ENCODE measurements at regions of chr4 and their contacts with region 1.

Region 1: GRCh38 chr4:17468371-17469221 is 43.3 kb downstream of the QDPR start:
- DNase-seq: no peak
- H3K4me3 ChIP-seq: no peak overlapping the region
- CTCF ChIP-seq: peak; percentile 51

Region 2: GRCh38 chr4:16450724-16451123 is 1017.9 kb before region 1 on chr4:
- CTCF ChIA-PET with region 1: interaction called, 16 read pairs
- POLR2A ChIA-PET with region 1: no interaction called
- DNase-seq: no peak
- H3K4me3 ChIP-seq: no peak overlapping the region
- CTCF ChIP-seq: peak; percentile 12

Region 3: DNA sequence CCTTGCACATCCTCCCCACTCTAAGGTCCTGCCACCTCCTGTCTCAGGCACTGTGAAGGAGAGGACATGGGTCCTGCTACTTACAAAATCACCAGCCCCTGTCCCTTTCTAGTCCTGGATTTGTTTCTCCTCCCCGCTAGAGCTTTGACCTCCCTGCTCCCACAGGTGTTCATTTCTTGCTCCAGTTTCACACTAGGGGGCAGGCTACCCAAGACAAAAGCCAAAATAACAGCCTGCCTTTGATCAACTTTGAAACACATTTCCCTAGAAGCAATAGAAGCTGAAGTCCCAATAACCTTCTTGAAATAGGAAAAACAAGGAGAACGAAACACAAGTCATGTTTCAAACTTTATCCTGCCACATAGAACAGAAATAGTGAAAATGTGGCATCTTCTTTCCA is 121.2 kb before region 1 on chr4:
- CTCF ChIA-PET with region 1: interaction called, 213 read pairs
- POLR2A ChIA-PET with region 1: no interaction called
- DNase-seq: no peak
- H3K4me3 ChIP-seq: no peak overlapping the region
- CTCF ChIP-seq: peak; percentile 58

Region 4: GRCh38 chr4:17447675-17448298 is 20.8 kb before region 1 on chr4:
- CTCF ChIA-PET with region 1: interaction called, 123 read pairs
- POLR2A ChIA-PET with region 1: no interaction called
- DNase-seq: no peak
- H3K4me3 ChIP-seq: no peak overlapping the region
- CTCF ChIP-seq: peak; percentile 66

Region 5: DNA sequence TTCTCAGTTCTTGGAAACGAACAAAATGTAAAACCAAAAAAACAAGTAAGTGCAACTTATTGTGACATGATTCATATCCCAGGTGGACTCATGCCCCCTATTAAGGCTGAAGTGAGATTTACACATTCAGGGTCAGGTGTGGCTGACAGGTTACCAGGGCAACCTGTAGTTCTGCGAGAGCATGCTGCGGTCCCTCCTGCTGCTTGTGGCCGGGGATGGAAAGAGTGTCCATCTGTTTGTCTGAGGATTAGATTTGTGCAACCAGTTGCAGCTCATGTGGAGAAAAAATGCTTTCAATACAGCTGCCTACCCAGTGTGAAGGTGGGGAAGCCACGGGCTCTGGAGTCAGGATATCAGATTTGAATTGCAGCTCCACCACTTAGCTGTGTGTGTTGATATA is 234.0 kb after region 1 on chr4:
- CTCF ChIA-PET with region 1: no interaction called
- POLR2A ChIA-PET with region 1: no interaction called
- DNase-seq: no peak
- H3K4me3 ChIP-seq: no peak overlapping the region
- CTCF ChIP-seq: no peak